ENCODE measurements at regions of chr14 and their contacts with region 1.

Region 1: DNA sequence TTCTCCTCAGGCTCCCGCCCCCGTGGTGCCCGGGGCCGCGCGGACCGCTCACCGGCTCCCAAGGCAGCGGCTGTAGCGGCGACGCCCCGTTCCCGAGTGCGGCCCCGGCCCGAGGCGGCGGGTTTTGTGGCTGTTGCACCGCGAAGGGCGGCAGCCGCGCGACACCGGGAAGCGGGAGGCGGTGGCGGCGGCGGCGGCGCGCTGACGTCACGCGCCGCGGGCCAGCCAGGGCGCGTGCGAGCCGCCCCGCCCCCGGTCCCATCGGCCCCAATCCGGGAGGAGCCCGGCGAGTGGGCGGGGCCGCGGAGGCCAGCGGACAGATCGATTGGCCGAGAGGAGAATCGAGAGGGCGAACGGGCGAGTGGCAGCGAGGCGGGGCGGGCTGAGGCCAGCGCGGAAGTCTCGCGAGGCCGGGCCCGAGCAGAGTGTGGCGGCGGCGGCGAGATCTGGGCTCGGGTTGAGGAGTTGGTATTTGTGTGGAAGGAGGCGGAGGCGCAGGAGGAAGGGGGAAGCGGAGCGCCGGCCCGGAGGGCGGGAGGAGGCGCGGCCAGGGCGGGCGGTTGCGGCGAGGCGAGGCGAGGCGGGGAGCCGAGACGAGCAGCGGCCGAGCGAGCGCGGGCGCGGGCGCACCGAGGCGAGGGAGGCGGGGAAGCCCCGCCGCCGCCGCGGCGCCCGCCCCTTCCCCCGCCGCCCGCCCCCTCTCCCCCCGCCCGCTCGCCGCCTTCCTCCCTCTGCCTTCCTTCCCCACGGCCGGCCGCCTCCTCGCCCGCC is at the start of gene YY1:
- DNase-seq: peak; percentile 98

Region 2: GRCh38 chr14:100221533-100222223 is 16.9 kb before region 1 on chr14:
- CTCF ChIA-PET with region 1: interaction called, 4 read pairs
- POLR2A ChIA-PET with region 1: interaction called, 13 read pairs
- DNase-seq: peak; percentile 54

Measured in HEK293T (cell line).